ENCODE measurements at regions of chr3 and their contacts with region 1.

Region 1: DNA sequence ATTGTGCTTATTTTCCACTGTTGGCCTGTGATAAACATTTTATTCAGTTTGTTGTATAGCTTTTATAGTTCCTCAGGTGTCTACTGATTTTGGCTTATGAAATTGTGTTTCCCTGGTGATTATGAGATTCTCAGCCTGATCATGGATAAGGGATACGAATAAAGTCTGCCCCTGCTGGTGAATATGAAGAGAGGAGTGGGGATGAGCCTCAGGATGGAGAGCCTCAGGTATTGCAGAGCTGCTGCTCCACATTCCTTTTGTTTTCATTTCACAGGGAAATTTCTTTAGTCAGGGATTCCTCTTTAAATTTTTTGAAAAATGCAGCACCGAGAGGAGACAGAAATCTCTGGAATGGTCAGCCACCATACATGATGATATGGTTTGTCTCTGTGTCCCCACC is 14.7 kb upstream of the RAB6B start:
- DNase-seq: no peak
- H3K4me3 ChIP-seq: no peak overlapping the region
- H3K27ac ChIP-seq: no peak overlapping the region
- H3K4me1 ChIP-seq: no peaks in the 10 kb centered on the region
- H3K27me3 ChIP-seq: no peaks in the 10 kb centered on the region
- CTCF ChIP-seq: no peak
- POLR2A ChIP-seq: no peak

Region 2: GRCh38 chr3:133661454-133662277 is 248.8 kb before region 1 on chr3 and contains the start of gene TOPBP1:
- intact Hi-C with region 1: loop called in 1 of 2 experiments (anchors 10 kb)
- DNase-seq: peak; percentile 72 to 86 (median 75)
- H3K4me3 ChIP-seq: peak within 1 kb of the TSS; percentile 28 to 95 (median 74)
- H3K27ac ChIP-seq: peak within 1 kb of the TSS in 4 of 5 donors; percentile 45 to 75 (median 68)
- H3K4me1 ChIP-seq: peaks cover 14 to 16% of the 10 kb centered on the region in 2 donors
- H3K27me3 ChIP-seq: no peaks in the 10 kb centered on the region
- CTCF ChIP-seq: no peak
- POLR2A ChIP-seq: peak in 1 of 2 donors; percentile 32
- total RNA-seq, gene TOPBP1: 9.6 to 62.1 (median 13.7) TPM

Measured in adrenal gland (tissue), 19 donors.